Heart right ventricle (tissue), 16 donors: ENCODE measurements at regions of chr12 and their contacts with region 1.

Region 1: GRCh38 chr12:30622509-30622908 is 73.2 kb downstream of the IPO8 start:
- DNase-seq: no peak
- ATAC-seq: no peak
- H3K4me3 ChIP-seq: no peak overlapping the region
- H3K27ac ChIP-seq: no peak overlapping the region
- H3K4me1 ChIP-seq: no peaks in the 10 kb centered on the region
- H3K27me3 ChIP-seq: no peaks in the 10 kb centered on the region
- CTCF ChIP-seq: no peak

Region 2: DNA sequence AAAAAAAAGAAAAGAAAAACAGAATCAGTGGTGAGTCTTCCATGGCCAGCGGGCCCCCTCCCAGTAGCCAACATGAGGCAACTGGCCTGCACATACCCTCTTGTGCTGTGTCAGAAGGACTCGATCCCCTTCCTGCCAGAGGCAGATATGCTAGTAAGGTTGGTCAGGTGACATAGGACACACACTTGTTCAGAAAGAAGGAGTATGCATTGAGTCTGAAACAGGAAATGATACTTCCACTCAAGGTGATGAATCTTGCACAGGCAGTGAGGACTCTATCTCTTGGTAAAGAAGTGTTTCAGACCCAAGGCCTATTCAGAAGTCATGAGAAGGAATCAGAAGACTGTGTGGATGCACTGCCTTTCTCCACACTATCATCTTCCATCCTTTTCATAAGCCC is 1743.1 kb before region 1 on chr12:
- intact Hi-C with region 1: loop called in 1 of 10 experiments (anchors 5 kb)
- DNase-seq: no peak
- ATAC-seq: no peak
- H3K4me3 ChIP-seq: no peak overlapping the region
- H3K27ac ChIP-seq: no peak overlapping the region
- H3K4me1 ChIP-seq: peaks cover 0 to 8% (median 0%) of the 10 kb centered on the region in 9 donors
- H3K27me3 ChIP-seq: peaks cover 0 to 9% (median 0%) of the 10 kb centered on the region in 7 donors
- CTCF ChIP-seq: no peak

Region 3: DNA sequence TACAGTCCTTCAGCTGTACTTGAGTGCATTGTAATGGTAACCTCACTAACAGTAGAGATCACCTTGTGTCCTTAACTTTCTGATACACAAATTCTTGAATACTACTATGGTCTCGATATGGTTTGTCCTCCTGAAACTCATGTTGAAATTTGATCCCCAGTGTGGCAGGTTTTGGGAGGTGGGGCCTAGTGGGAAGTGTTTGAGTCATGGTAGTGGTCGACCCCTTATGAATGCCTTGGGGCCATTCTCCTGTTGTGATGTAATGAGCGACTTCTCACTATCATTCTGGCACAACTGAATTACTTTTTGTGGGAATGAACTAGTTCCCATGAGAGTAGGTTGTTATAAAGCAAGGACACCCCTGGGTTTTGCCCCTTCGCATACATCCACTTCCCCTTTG is 20.9 kb after region 1 on chr12:
- intact Hi-C with region 1: no loop called
- DNase-seq: no peak
- ATAC-seq: no peak
- H3K4me3 ChIP-seq: no peak overlapping the region
- H3K27ac ChIP-seq: no peak overlapping the region
- H3K4me1 ChIP-seq: no peaks in the 10 kb centered on the region
- H3K27me3 ChIP-seq: no peaks in the 10 kb centered on the region
- CTCF ChIP-seq: no peak